ENCODE measurements at regions of chr12 and their contacts with region 1.

Region 1: GRCh38 chr12:120640840-120641833 is 711 bp downstream of the CABP1 start:
- DNase-seq: peak; percentile 49
- H3K4me3 Mint-ChIP-seq: peak overlapping the region; percentile 66
- H3K27ac Mint-ChIP-seq: no peak overlapping the region
- H3K4me1 Mint-ChIP-seq: peaks cover 10% of the 10 kb centered on the region
- H3K27me3 Mint-ChIP-seq: peaks cover 45% of the 10 kb centered on the region

Region 2: DNA sequence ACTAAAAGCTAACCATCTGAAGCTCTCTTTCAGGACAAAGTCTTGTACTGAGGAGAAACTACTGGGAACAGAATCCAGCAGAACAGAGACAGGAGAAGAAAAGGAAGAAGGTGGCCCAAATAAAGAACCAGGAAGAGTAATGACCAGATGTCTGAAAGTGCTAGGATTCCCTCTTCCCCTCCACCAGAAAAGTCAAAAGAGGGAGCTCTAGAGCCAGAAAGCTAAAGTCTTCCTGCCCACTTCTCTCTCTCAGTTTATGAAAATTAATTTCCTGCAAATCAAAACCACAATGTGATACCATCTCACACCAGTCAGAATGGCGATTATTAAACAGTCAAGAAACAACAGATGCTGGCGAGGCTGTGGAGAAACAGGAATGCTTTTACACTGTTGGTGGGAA is 215.8 kb after region 1 on chr12:
- intact Hi-C with region 1: loop called (anchors 10 kb)
- DNase-seq: no peak
- H3K4me3 Mint-ChIP-seq: no peak overlapping the region
- H3K27ac Mint-ChIP-seq: no peak overlapping the region
- H3K4me1 Mint-ChIP-seq: peaks cover 48% of the 10 kb centered on the region
- H3K27me3 Mint-ChIP-seq: no peaks in the 10 kb centered on the region

Measured in activated T-helper 1 cell treated with anti-CD3 and anti-CD28 coated beads, Interleukin-12 subunit alpha, Interleukin-12 subunit beta, Interleukin-2, Interleukin-4 antibody, amounts not matched to agents 30 ng/mL and 10 ng/mL and 1 ng/mL, durations not matched to agents 14 hours and 24 hours and 36 hours (primary cell).